GM23248 (cell line): ENCODE measurements at regions of chr6 and their contacts with region 1.

Region 1: DNA sequence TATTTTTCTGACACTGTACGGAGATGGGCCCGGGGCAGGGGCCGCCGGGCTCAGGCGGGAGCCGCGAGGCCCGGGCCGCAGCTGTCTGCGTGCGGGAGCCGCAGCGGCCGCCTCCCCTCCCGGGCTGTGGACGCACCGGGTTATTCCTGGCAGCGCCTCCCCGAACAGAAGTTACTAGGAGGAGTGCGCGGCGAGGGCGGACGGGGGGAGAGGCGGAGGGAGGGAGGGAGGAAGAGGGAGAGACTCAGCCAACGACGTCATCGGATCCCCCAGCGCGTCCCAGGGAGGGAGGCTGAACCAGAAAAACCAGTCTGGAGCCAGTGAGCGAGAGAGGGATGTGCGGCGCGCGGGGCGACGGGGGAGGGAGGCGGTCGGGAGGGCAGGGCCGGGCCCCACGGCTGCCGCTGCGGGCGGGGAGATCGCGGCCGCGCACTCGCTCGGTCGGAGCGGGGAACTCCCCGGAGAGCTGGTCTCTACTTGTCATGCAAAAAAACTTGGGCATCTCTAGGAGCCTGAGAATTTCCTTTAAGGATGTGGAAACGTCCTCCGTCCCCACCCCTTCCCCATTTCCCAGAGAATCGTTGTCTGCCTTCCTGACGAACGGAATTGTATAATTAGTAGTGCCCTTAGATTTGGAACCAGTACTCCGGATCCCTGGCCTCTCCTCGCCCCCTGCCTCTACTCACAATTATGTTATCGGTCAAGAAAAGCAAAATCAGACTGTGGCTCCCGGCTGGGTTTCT is 1.4 kb upstream of the HIVEP2 start:
- DNase-seq: peak; percentile 99
- H3K4me3 ChIP-seq: peak overlapping the region; percentile 94
- H3K27ac ChIP-seq: peak overlapping the region; percentile 97
- H3K4me1 ChIP-seq: peaks cover 25% of the 10 kb centered on the region
- H3K27me3 ChIP-seq: no peaks in the 10 kb centered on the region

Region 2: GRCh38 chr6:142692942-142693341 is 253.4 kb before region 1 on chr6:
- in situ Hi-C with region 1: loop called (anchors 10 kb)
- DNase-seq: peak; percentile 97
- H3K4me3 ChIP-seq: peak overlapping the region; percentile 63
- H3K27ac ChIP-seq: peak overlapping the region; percentile 96
- H3K4me1 ChIP-seq: peaks cover 32% of the 10 kb centered on the region
- H3K27me3 ChIP-seq: no peaks in the 10 kb centered on the region